Ascending aorta (tissue), 2 donors: ENCODE measurements at regions of chr21 and their contacts with region 1.

Region 1: DNA sequence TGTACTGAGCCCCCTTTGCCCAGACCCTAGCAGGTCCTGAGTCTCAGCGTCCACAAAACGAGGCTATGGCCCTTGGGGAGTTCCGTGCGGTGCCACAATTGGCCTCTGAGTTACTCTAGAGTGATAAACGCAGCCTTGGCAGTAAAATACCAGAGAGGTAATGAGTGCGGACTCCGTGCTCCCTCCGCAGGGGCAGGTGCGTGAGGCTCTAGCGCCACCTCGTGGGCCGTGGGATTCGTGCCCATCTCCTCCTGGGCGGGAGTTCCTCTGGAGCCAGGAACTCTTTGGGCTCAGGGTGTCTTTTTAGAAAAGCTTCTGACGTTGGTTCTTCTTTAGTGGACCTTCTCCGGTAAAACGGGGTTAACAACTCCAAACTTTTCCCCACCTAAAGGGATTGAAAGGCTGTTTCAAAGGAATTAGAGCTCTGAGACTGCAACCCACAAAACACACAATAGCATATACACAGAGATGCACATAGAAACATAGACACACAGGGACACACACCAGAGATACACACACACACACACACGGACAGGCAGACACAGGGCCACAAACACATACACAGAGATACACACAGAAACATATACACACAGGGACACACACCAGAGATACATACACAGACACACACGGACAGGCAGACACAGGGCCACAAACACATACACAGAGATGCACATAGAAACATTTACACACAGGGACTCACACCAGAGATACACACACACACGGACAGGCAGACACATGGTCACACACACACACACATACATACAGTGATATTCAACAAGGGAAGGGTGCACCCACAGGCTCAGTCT is 99.4 kb downstream of the KCNJ15 start:
- DNase-seq: peak in 1 of 2 donors; percentile 89
- H3K4me3 ChIP-seq: no peak overlapping the region
- H3K27ac ChIP-seq: peak overlapping the region in 1 of 2 donors; percentile 90
- H3K4me1 ChIP-seq: peaks cover 8 to 12% of the 10 kb centered on the region in 2 donors
- H3K27me3 ChIP-seq: no peaks in the 10 kb centered on the region
- CTCF ChIP-seq: peak; percentile 94 to 98 (median 97)

Region 2: GRCh38 chr21:37675202-37675801 is 680.9 kb before region 1 on chr21:
- intact Hi-C with region 1: loop called (anchors 2 kb)
- DNase-seq: peak in 1 of 2 donors; percentile 78
- H3K4me3 ChIP-seq: peak overlapping the region; percentile 29 to 42
- H3K27ac ChIP-seq: no peak overlapping the region
- H3K4me1 ChIP-seq: no peaks in the 10 kb centered on the region
- H3K27me3 ChIP-seq: no peaks in the 10 kb centered on the region
- CTCF ChIP-seq: peak; percentile 73 to 97 (median 93)

Region 3: GRCh38 chr21:37711836-37712568 is 644.2 kb before region 1 on chr21:
- intact Hi-C with region 1: loop called (anchors 5 kb)
- DNase-seq: peak in 1 of 2 donors; percentile 81
- H3K4me3 ChIP-seq: no peak overlapping the region
- H3K27ac ChIP-seq: peak overlapping the region; percentile 54 to 74
- H3K4me1 ChIP-seq: peaks cover 0 to 4% of the 10 kb centered on the region in 2 donors
- H3K27me3 ChIP-seq: no peaks in the 10 kb centered on the region
- CTCF ChIP-seq: peak; percentile 74 to 89 (median 74)

Region 4: GRCh38 chr21:38159355-38159754 is 196.8 kb before region 1 on chr21:
- intact Hi-C with region 1: loop called (anchors 2 kb)
- DNase-seq: peak in 1 of 2 donors; percentile 82
- H3K4me3 ChIP-seq: no peak overlapping the region
- H3K27ac ChIP-seq: peak overlapping the region in 1 of 2 donors; percentile 45
- H3K4me1 ChIP-seq: no peaks in the 10 kb centered on the region
- H3K27me3 ChIP-seq: no peaks in the 10 kb centered on the region
- CTCF ChIP-seq: peak; percentile 58 to 71 (median 60)

Region 5: DNA sequence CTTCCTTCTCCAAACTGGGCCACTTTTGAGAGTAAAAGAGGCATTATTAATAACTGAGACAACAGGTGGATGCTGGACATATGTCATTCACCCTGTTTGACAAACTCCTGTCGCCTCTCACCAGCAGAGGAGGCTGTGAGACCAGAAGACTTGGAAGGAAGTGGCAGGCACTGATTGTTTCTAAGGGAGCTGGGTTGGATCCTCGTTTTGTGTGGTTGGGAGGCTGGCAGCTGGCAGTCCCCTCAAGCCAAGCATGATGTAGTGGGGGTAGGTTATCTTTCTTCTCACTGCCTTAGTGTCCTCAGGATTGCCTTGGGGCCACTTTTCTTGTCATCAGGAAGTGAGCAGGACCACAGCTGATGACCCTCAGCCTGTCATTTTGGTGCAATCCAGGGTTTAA is 185.9 kb before region 1 on chr21:
- intact Hi-C with region 1: loop called (anchors 1 kb)
- DNase-seq: no peak
- H3K4me3 ChIP-seq: no peak overlapping the region
- H3K27ac ChIP-seq: peak overlapping the region in 1 of 2 donors; percentile 51
- H3K4me1 ChIP-seq: peaks cover 0 to 28% of the 10 kb centered on the region in 2 donors
- H3K27me3 ChIP-seq: no peaks in the 10 kb centered on the region
- CTCF ChIP-seq: peak in 2 of 3 experiments; percentile 11 to 62

Region 6: DNA sequence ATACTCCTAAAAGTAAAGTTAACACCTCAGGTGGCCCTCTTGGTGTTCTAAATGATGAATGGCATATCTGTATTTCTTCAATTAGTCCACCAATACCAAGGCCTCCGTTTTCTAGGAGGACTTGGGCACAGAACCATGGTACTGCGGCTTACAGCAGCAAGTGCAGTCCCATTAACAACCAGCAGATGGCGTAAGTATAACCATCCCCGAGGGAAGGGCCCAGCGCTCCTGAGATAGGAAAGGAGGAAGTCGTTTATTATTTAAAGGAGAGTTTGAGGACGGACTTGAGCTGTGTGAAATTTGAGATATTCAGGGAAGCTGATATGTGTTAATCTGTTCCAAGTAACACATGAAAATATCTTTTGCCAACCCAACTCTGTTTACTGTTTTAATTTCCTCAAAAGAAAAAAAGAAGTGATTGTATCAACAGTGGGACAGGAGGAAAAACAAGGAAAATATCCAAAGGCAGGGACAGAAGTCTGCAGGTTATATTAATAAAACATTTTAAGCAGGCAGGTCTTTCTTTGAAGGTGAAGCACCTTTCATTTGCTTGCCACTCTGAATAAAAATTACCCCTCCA is 137.1 kb before region 1 on chr21:
- intact Hi-C with region 1: loop called (anchors 1 kb)
- DNase-seq: peak in 1 of 2 donors; percentile 85
- H3K4me3 ChIP-seq: no peak overlapping the region
- H3K27ac ChIP-seq: peak overlapping the region; percentile 52 to 57
- H3K4me1 ChIP-seq: peaks cover 2 to 9% of the 10 kb centered on the region in 2 donors
- H3K27me3 ChIP-seq: no peaks in the 10 kb centered on the region
- CTCF ChIP-seq: peak; percentile 89 to 96 (median 96)

Region 7: GRCh38 chr21:38297194-38297631 is 59.0 kb before region 1 on chr21:
- intact Hi-C with region 1: loop called (anchors 2 kb)
- DNase-seq: no peak
- H3K4me3 ChIP-seq: no peak overlapping the region
- H3K27ac ChIP-seq: no peak overlapping the region
- H3K4me1 ChIP-seq: peaks cover 0 to 8% of the 10 kb centered on the region in 2 donors
- H3K27me3 ChIP-seq: no peaks in the 10 kb centered on the region
- CTCF ChIP-seq: no peak

Region 8: DNA sequence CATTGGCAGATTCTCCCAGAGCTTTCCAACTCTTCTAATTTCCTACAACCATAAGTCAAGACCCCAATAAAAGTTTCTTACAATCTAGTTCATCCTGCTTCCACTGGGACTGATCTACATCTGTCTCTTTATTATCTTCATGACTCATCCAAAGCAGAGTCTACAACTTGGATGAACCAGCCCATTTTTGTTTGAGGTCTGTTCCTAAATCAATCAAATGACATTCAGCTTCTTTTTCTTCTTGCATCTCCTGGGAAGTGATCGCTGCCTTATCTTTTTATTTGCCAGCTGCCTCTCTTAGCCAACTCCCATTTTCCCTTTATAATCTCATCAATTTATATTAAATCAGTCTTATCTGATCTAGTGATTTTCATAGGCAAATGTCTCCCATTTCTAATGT is 36.5 kb after region 1 on chr21:
- intact Hi-C with region 1: no loop called
- DNase-seq: no peak
- H3K4me3 ChIP-seq: no peak overlapping the region
- H3K27ac ChIP-seq: no peak overlapping the region
- H3K4me1 ChIP-seq: peaks cover 0 to 10% of the 10 kb centered on the region in 2 donors
- H3K27me3 ChIP-seq: no peaks in the 10 kb centered on the region
- CTCF ChIP-seq: no peak